ENCODE measurements at regions of chr6 and their contacts with region 1.

Region 1: DNA sequence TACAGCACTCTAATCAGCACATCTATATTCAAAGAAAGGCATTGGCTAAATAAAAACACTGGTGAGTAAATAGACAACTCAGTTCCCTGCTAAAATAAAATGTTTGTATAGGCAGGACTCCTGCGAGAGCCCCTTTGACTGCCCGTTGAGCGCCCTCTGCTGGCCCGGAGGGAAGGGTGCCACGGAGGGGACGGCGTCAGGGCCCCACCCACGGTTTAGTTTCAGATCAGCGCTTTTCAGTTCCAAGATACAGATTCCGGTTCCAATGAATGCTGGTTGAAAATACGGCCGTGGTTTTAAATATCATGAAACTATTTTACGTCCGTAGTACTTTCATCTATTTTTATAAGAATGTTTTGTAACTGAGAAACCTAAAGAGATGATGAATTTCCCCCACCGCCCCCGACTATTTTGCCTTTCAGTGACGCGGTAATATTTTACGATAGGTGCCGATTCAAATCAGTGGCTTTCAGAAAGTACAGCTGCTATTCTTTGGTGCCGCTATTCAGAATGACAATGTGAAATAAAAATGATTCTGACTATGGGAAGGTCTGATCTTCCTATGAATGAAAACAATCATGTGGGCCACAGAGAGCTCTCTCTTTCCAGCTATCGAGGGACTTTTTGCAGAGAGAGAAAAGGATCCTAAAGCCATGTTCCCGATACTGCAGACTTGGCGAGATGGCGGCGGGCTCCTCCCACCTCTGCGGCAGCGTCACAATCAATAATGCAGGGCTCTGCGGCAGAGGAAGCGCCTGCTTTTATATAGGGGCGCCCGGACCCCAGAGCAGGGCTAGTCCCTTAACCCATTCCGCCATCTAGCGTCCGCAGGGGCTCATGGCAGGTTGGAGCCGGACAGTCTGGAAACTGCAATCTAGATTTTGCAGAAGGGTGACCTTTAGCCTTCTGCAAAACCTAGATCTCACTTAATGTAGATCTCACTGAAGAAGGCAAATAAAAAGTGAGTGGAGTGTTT is 10.6 kb upstream of the CCN6 start:
- DNase-seq: peak; percentile 92 to 96 (median 96)
- H3K4me3 ChIP-seq: peak overlapping the region; percentile 20 to 97 (median 86)
- H3K27ac ChIP-seq: peak overlapping the region; percentile 91 to 93
- H3K4me1 ChIP-seq: peaks cover 0 to 8% (median 2%) of the 10 kb centered on the region in 4 experiments
- H3K27me3 ChIP-seq: no peaks in the 10 kb centered on the region

Region 2: GRCh38 chr6:111709615-111710398 is 333.5 kb before region 1 on chr6:
- CTCF ChIA-PET with region 1: interaction called, 107 read pairs
- POLR2A ChIA-PET with region 1: no interaction called
- DNase-seq: peak; percentile 72 to 84 (median 79)
- H3K4me3 ChIP-seq: peak overlapping the region in 4 of 7 experiments; percentile 13 to 59 (median 35)
- H3K27ac ChIP-seq: no peak overlapping the region
- H3K4me1 ChIP-seq: peaks cover 0 to 3% (median 2%) of the 10 kb centered on the region in 4 experiments
- H3K27me3 ChIP-seq: no peaks in the 10 kb centered on the region

Region 3: DNA sequence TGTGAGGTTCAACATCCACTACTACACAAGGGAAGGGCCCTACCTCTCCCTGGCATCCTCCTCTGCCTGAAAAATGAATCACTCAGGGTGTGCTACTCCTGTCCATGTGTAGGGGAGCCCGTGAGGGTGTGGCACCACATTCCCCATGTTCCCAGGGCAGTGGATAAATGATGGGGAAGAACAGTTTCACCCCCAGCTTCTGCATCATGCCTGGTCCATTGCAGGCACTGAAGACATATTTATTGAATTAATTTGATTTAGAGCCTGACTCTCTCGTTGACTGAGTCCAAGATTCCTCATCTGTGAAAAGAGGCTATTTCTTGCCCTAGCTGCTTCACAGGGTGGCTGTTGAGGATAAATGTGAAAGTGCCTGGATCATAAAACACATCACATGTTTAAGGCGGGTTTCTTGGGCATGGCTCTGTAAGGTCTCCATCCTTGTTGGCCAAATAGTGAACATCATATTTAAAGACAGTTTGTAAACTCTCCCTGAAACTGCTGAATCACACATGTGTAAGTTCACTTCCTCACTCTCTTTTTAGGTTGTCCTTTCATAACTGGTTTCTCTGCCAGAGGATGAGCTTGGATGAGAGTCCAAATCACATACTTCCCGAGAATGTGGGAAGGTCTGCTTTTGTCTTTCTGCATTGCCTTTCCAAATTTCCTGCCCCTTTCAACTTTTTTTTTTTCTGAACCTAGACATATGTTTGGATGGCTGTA is 90.3 kb before region 1 on chr6:
- CTCF ChIA-PET with region 1: no interaction called
- POLR2A ChIA-PET with region 1: no interaction called
- DNase-seq: peak in 2 of 3 donors; percentile 45 to 61
- H3K4me3 ChIP-seq: no peak overlapping the region
- H3K27ac ChIP-seq: no peak overlapping the region
- H3K4me1 ChIP-seq: peaks cover 0 to 3% (median 0%) of the 10 kb centered on the region in 4 experiments
- H3K27me3 ChIP-seq: no peaks in the 10 kb centered on the region

Region 4: GRCh38 chr6:112010328-112010727 is 33.0 kb before region 1 on chr6:
- CTCF ChIA-PET with region 1: interaction called, 51 read pairs
- POLR2A ChIA-PET with region 1: no interaction called
- DNase-seq: no peak
- H3K4me3 ChIP-seq: no peak overlapping the region
- H3K27ac ChIP-seq: no peak overlapping the region
- H3K4me1 ChIP-seq: peaks cover 0 to 13% (median 10%) of the 10 kb centered on the region in 4 experiments
- H3K27me3 ChIP-seq: no peaks in the 10 kb centered on the region

Region 5: GRCh38 chr6:112029045-112029822 is 14.1 kb before region 1 on chr6:
- CTCF ChIA-PET with region 1: interaction called, 23 read pairs
- POLR2A ChIA-PET with region 1: no interaction called
- DNase-seq: peak; percentile 73 to 85 (median 81)
- H3K4me3 ChIP-seq: no peak overlapping the region
- H3K27ac ChIP-seq: no peak overlapping the region
- H3K4me1 ChIP-seq: peaks cover 7 to 18% (median 8%) of the 10 kb centered on the region in 4 experiments
- H3K27me3 ChIP-seq: no peaks in the 10 kb centered on the region

Region 6: GRCh38 chr6:112087136-112087911 is 44.0 kb after region 1 on chr6 and contains the starts of genes FAM229B and TUBE1:
- CTCF ChIA-PET with region 1: interaction called, 11 read pairs
- POLR2A ChIA-PET with region 1: no interaction called
- DNase-seq: peak; percentile 98 to 100 (median 99)
- H3K4me3 ChIP-seq: peak within 1 kb of the TSS; percentile 88 to 99 (median 94)
- H3K27ac ChIP-seq: peak within 1 kb of the TSS; percentile 85 to 96
- H3K4me1 ChIP-seq: peaks cover 0 to 10% (median 4%) of the 10 kb centered on the region in 4 experiments
- H3K27me3 ChIP-seq: no peaks in the 10 kb centered on the region

Region 7: GRCh38 chr6:112188906-112189305 is 145.6 kb after region 1 on chr6:
- CTCF ChIA-PET with region 1: no interaction called
- POLR2A ChIA-PET with region 1: no interaction called
- DNase-seq: no peak
- H3K4me3 ChIP-seq: no peak overlapping the region
- H3K27ac ChIP-seq: no peak overlapping the region
- H3K4me1 ChIP-seq: peaks cover 0 to 9% (median 5%) of the 10 kb centered on the region in 4 experiments
- H3K27me3 ChIP-seq: peaks cover 0 to 7% (median 0%) of the 10 kb centered on the region in 5 experiments

Measured in common myeloid progenitor, CD34-positive (primary cell).